Heart left ventricle (tissue), 16 donors: ENCODE measurements at regions of chr14 and their contacts with region 1.

Region 1: GRCh38 chr14:72617391-72618031 is 276.4 kb downstream of the DPF3 start:
- DNase-seq: peak; percentile 59 to 74 (median 63)
- ATAC-seq: peak; percentile 39 to 67 (median 58)
- H3K4me3 ChIP-seq: peak overlapping the region in 4 of 12 donors; percentile 0 to 16 (median 8)
- H3K27ac ChIP-seq: peak overlapping the region; percentile 65 to 92 (median 84)
- H3K4me1 ChIP-seq: peaks cover 5 to 74% (median 61%) of the 10 kb centered on the region in 12 donors
- H3K27me3 ChIP-seq: no peaks in the 10 kb centered on the region
- CTCF ChIP-seq: no peak
- POLR2A ChIP-seq: no peak

Region 2: GRCh38 chr14:71852181-71852580 is 765.3 kb before region 1 on chr14:
- intact Hi-C with region 1: no loop called
- DNase-seq: no peak
- ATAC-seq: peak; percentile 81 to 98 (median 86)
- H3K4me3 ChIP-seq: no peak overlapping the region
- H3K27ac ChIP-seq: no peak overlapping the region
- H3K4me1 ChIP-seq: peaks cover 0 to 13% (median 5%) of the 10 kb centered on the region in 12 donors
- H3K27me3 ChIP-seq: no peaks in the 10 kb centered on the region
- CTCF ChIP-seq: no peak
- POLR2A ChIP-seq: no peak

Region 3: DNA sequence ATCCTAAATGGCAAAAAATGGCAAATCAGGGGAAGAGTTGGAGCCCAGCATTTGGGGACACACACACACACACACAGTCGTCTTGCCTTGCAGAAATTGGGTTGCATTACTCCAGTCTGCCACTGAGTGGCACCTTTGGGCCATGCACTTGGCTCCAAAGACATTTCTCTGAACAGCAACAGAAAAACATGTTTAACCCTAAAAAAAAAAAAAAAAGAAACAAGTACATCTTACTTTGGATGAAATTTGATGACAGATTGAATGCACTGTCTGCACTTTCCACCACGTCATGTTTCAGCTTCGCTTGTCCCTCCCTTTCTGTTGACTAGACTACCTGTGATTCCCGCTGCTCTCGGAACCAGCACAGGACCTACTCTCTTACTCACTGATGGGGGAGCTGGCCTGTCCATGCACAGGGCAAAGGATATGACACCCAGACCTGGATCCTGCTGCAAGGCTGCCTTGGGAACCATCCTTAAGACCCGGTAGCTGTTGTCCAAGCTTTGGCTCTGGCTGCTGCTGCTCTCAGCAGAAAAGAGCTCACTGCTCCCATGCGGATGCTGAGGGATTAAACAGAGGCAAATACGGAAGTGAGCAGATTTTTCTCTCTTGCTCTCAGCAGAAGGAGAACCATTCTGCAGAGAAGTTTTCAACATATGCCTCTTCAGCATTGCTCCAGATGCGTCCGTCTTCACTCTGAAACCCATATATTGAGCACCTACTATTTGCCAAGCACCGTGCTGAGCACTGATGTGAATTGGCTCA is 100.4 kb before region 1 on chr14:
- intact Hi-C with region 1: loop called in 1 of 10 experiments (anchors 5 kb)
- DNase-seq: peak in 4 of 5 donors; percentile 42 to 65 (median 52)
- ATAC-seq: peak; percentile 51 to 77 (median 68)
- H3K4me3 ChIP-seq: no peak overlapping the region
- H3K27ac ChIP-seq: no peak overlapping the region
- H3K4me1 ChIP-seq: peaks cover 0 to 26% (median 0%) of the 10 kb centered on the region in 12 donors
- H3K27me3 ChIP-seq: no peaks in the 10 kb centered on the region
- CTCF ChIP-seq: peak; percentile 82 to 93 (median 86)
- POLR2A ChIP-seq: no peak

Region 4: DNA sequence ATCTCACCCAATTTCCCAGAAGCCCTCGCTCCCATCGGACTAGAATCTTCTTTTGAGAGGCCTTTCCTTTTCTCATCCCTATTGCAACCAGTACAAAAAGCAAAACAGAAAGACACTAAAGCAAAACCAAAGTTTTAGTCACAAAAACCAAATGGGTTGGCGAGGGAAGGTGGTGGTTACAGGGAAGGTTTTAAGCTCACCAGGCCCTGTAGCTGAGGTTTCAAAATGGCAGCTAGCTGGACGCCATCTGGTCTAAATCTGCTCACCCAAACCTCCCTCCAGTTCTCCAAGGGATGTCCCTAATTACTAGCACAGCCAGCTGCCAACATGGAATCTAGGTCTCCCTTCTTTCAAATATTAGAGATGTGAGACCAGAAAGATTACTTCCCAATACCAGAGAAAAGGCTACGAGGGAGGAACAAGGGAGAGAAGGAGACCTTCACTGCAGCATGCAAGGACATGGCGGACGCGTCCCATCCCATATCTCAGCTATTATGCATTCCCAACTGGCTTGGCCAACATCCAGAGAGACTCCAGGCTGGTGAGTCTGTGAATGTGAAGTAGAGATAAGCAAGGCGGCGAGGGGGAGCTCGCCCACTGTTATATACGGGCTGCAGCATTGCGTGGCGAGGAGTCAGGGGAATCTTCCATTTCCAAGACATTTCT is 205.6 kb after region 1 on chr14:
- intact Hi-C with region 1: loop called in 1 of 10 experiments (anchors 10 kb)
- DNase-seq: peak; percentile 68 to 87 (median 73)
- ATAC-seq: peak; percentile 87 to 93 (median 88)
- H3K4me3 ChIP-seq: no peak overlapping the region
- H3K27ac ChIP-seq: peak overlapping the region; percentile 6 to 91 (median 71)
- H3K4me1 ChIP-seq: peaks cover 0 to 31% (median 5%) of the 10 kb centered on the region in 12 donors
- H3K27me3 ChIP-seq: no peaks in the 10 kb centered on the region
- CTCF ChIP-seq: no peak
- POLR2A ChIP-seq: no peak

Region 5: GRCh38 chr14:72904840-72905561 is 287.5 kb after region 1 on chr14:
- intact Hi-C with region 1: loop called in 1 of 10 experiments (anchors 10 kb)
- DNase-seq: peak in 3 of 5 donors; percentile 43 to 59 (median 58)
- ATAC-seq: peak; percentile 31 to 69 (median 58)
- H3K4me3 ChIP-seq: no peak overlapping the region
- H3K27ac ChIP-seq: no peak overlapping the region
- H3K4me1 ChIP-seq: peaks cover 0 to 27% (median 10%) of the 10 kb centered on the region in 12 donors
- H3K27me3 ChIP-seq: no peaks in the 10 kb centered on the region
- CTCF ChIP-seq: peak; percentile 83 to 96 (median 91)
- POLR2A ChIP-seq: no peak